GM10248 (cell line): ENCODE measurements at regions of chr5 and their contacts with region 1.

Region 1: DNA sequence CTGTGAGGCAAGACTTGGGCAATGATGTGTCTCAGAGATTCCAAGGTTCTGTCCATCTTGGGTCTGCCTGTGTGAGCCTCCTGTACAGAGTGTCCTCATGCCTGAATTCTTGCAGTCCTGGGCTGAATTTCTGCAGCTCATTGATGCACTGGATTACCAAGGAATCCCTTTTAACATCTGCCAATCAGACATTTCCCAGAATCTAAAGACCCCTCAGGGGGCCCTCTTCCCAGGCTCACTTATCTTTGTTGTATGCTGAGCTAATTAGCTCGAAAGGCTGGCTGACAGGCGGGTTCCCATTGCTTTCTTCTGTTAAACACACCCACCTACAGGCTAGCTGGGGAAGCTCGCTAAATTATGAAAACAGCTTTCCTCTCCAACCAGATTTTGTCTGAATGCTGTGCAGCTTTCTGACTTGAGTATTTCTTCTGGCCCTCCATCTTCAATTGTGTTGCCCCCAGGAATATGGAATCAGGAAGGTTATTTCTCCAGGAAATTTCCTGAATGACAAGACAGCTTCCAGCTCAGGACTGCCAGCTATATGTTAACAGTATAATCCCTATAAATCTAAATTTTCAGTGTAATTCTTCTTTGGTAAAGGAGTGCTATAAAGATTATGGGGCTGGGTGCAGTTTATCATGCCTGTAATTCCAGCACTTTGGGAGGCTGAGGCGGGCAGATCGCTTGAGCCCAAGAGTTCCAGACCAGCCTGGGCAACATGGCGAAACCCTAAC is at the start of gene LIX1:
- DNase-seq: peak; percentile 48
- CTCF ChIP-seq: peak; percentile 63

Region 2: GRCh38 chr5:96997265-96997859 is 145.3 kb before region 1 on chr5:
- CTCF ChIA-PET with region 1: interaction called, 15 read pairs
- POLR2A ChIA-PET with region 1: no interaction called
- DNase-seq: peak; percentile 13
- CTCF ChIP-seq: peak; percentile 26

Region 3: DNA sequence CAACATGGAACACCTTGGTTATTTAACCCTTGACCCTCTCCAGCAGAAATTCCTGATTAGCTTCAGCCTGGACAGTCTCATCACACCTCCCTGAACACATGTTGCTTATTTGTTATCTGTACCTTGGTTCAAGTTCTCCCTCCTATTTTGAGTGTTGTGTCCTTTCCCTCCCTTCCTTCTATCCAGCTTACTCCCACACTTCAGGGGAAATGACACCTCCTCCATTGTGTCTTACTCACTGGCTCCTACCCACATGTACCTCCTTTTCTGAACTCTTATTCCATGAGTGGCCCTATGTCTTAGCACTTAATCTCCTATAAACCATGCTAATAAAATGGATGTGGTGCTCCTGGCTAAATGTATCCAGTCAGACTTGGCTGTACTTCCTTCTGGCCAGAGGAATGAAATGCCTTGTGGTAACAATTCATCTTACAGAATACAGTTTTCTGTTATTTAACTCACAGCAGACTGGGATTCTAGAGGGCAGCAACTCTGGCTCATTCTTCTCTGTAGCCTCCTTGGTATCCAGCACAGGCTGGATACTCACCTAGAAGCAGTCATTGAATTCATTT is 11.5 kb before region 1 on chr5:
- CTCF ChIA-PET with region 1: interaction called, 11 read pairs
- POLR2A ChIA-PET with region 1: no interaction called
- DNase-seq: no peak
- CTCF ChIP-seq: no peak

Region 4: GRCh38 chr5:98218838-98219237 is 1076.2 kb after region 1 on chr5:
- CTCF ChIA-PET with region 1: no interaction called
- POLR2A ChIA-PET with region 1: no interaction called
- DNase-seq: no peak
- CTCF ChIP-seq: no peak